Activated CD4-positive, alpha-beta T cell treated with anti-CD3 and anti-CD28 coated beads for 36 hours (primary cell): ENCODE measurements at regions of chr1 and their contacts with region 1.

Region 1: DNA sequence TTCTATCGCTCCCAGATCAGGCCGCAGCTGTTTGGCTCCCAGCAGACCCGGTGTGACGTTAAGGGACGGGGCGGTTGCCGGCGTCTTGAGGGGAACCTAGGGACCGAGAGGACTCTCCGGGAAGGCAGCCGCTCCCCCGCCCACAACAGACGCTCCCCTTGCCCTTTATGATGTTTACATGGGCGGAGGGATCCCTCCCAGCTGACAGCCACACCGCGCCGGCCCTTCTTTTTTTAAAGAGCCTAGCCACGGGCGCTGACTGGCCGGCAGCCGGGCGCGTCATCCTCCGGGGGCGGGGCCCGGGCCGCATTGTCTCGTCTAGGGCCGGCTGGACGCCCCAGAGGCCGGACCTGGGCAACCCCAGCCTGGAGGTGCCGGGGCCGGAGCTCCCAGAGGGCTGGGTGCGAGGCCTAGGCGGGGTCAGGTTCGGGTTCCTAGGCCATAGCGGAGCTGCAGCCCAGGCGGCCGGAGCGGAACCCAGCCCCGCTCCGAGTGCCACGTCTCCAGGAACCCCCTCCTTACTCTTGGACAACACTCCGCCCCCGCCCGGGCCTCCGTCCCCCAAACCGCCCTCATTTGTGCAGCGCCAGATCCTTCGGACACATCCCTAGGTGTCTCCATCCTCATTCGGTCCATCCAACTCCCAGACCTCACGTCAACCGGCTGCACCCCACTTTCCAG is at the start of gene PCAT6:
- DNase-seq: peak; percentile 93
- ATAC-seq: peak; percentile 66
- H3K4me3 Mint-ChIP-seq: peak within 1 kb of the TSS; percentile 75
- H3K27ac Mint-ChIP-seq: peak within 1 kb of the TSS; percentile 68
- H3K4me1 Mint-ChIP-seq: peaks cover 32% of the 10 kb centered on the region
- H3K27me3 Mint-ChIP-seq: peaks cover 8% of the 10 kb centered on the region
- total RNA-seq, gene PCAT6: 0.59 to 2.2 TPM

Region 2: DNA sequence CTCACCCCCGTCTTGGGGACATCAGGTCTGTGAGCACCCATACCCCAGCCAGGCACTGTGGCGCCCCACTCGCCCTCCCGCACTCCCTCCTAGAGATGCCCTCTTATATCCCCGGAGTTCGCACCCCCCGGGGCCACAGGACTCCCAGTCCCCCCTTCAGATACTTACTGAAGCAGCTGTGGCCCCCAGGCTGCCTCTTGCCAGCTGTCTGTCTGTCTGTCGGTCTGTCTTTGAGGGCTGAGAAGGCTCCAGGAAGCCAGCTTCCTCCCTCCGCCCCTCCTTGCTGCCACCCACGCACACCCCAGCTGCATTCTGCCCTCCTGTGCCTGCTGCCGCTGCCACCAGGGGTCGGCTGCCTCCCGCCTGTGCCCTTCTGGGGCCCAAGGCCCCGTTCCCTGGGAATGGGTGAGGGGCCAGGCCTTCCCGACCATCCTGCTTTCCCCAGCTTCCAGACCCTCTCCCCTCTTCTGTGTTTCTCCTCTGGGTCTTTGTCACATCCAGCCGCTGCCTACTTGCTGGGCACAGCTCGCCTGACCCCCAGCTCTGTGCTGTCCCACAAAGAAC is 650.3 kb before region 1 on chr1 and contains the start of gene PTPN7:
- CTCF ChIA-PET with region 1: no interaction called
- POLR2A ChIA-PET with region 1: no interaction called
- intact Hi-C with region 1: loop called in 1 of 2 experiments (anchors 2 kb)
- DNase-seq: peak; percentile 98
- ATAC-seq: peak; percentile 69
- H3K4me3 Mint-ChIP-seq: peak within 1 kb of the TSS; percentile 97
- H3K27ac Mint-ChIP-seq: peak within 1 kb of the TSS; percentile 99
- H3K4me1 Mint-ChIP-seq: peaks cover 80% of the 10 kb centered on the region
- H3K27me3 Mint-ChIP-seq: no peaks in the 10 kb centered on the region
- total RNA-seq, gene PTPN7: 188 to 221 TPM

Region 3: GRCh38 chr1:202692959-202693555 is 117.7 kb before region 1 on chr1:
- CTCF ChIA-PET with region 1: no interaction called
- POLR2A ChIA-PET with region 1: no interaction called
- intact Hi-C with region 1: no loop called
- DNase-seq: peak; percentile 85
- ATAC-seq: peak; percentile 57
- H3K4me3 Mint-ChIP-seq: no peak overlapping the region
- H3K27ac Mint-ChIP-seq: no peak overlapping the region
- H3K4me1 Mint-ChIP-seq: no peaks in the 10 kb centered on the region
- H3K27me3 Mint-ChIP-seq: peaks cover 33% of the 10 kb centered on the region

Region 4: DNA sequence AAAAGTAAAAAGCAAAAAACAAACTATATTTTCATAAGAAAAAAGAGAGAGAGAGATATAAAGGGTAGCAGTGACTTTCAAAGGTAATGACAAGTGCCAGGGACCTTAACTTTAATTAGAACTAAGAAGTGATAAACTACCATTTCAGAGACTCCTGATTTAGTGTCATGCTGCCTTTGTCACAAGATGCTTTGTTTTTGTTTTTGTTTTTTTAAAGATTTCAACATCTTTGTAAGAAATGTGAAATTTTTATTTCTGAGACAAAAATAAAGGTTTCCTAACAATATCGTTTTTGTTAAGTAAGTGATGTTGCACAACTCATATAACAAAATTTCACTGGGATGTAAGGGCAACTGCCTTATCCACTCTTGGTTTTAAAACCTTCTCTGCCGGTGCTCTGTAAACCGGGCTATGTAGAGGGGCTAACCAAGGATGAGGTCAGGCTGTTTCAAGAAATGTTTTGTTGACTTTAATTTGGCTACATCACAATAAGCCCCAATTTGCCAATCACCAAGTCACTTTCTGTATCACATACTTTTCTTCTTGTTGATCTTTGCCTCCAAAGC is 65.3 kb before region 1 on chr1:
- CTCF ChIA-PET with region 1: no interaction called
- POLR2A ChIA-PET with region 1: interaction called, 6 read pairs
- intact Hi-C with region 1: loop called in 1 of 2 experiments (anchors 5 kb)
- DNase-seq: no peak
- ATAC-seq: no peak
- H3K4me3 Mint-ChIP-seq: no peak overlapping the region
- H3K27ac Mint-ChIP-seq: no peak overlapping the region
- H3K4me1 Mint-ChIP-seq: no peaks in the 10 kb centered on the region
- H3K27me3 Mint-ChIP-seq: no peaks in the 10 kb centered on the region

Region 5: DNA sequence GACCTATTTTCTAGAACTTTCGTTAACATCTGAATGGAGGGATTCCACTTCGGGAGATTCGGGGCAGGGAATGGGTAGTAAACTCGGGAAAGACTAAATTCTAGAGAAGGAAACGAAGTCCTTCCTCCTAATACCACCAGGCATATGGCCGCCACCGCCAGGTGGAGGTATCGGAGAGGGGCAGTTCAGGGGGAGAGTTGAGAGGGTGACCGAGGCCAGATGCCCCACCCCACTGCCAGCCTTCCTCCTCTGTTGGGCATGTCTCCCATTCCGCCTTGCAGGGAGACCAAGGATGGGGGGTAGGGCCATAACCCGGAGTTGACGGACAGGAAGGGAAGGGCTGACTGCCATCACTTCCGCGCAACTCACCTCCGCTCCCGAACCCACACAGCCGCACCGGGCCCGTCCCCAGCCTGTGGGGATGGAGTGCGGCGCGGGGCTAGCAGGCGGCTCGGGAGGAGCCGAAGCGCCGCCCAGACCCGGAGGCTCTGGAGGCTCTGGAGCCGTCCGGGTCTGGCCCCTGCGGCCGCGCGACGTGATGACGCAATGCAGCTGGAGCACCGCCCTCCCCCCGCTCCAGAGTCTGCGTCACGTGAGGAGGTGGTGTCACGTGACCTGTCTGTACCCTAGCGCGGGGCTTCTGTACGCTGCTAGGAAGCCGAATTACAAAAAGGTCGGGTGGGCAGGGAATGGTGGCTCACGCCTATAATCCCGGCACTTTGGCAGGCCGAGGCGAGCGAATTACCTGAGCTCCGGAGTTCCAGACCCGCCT is 116.2 kb after region 1 on chr1 and contains the start of gene KLHL12:
- CTCF ChIA-PET with region 1: no interaction called
- POLR2A ChIA-PET with region 1: no interaction called
- intact Hi-C with region 1: loop called in 1 of 2 experiments (anchors 1 kb)
- DNase-seq: peak; percentile 98
- ATAC-seq: peak; percentile 96
- H3K4me3 Mint-ChIP-seq: peak within 1 kb of the TSS; percentile 86
- H3K27ac Mint-ChIP-seq: peak within 1 kb of the TSS; percentile 85
- H3K4me1 Mint-ChIP-seq: peaks cover 24% of the 10 kb centered on the region
- H3K27me3 Mint-ChIP-seq: no peaks in the 10 kb centered on the region
- total RNA-seq, gene KLHL12: 32.1 to 39.1 TPM

Region 6: DNA sequence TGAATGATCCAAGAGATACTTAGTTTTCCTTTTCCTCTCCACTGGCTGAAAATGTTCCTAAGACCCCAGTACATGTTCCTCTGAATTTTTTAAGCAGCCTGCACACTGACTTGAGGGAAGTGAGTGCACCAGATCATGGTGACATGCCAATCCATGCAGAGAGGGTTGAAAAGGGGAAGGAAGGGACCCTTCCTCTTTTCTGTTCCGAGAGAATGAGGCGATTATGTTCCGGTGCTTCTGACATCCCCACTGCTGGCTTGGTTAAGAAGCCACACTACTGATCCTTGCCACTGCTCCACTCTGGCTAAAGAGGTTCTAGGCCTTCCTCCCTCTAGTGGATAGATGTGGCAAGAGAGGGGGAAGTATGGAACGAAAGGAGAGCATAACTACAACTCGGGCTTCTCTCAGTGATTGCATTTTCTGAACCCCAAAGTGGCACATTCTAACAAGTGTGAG is 158.1 kb after region 1 on chr1:
- CTCF ChIA-PET with region 1: no interaction called
- POLR2A ChIA-PET with region 1: no interaction called
- intact Hi-C with region 1: loop called in 1 of 2 experiments (anchors 2 kb)
- DNase-seq: peak; percentile 51
- ATAC-seq: peak; percentile 65
- H3K4me3 Mint-ChIP-seq: no peak overlapping the region
- H3K27ac Mint-ChIP-seq: peak overlapping the region; percentile 16
- H3K4me1 Mint-ChIP-seq: peaks cover 27% of the 10 kb centered on the region
- H3K27me3 Mint-ChIP-seq: no peaks in the 10 kb centered on the region

Region 7: DNA sequence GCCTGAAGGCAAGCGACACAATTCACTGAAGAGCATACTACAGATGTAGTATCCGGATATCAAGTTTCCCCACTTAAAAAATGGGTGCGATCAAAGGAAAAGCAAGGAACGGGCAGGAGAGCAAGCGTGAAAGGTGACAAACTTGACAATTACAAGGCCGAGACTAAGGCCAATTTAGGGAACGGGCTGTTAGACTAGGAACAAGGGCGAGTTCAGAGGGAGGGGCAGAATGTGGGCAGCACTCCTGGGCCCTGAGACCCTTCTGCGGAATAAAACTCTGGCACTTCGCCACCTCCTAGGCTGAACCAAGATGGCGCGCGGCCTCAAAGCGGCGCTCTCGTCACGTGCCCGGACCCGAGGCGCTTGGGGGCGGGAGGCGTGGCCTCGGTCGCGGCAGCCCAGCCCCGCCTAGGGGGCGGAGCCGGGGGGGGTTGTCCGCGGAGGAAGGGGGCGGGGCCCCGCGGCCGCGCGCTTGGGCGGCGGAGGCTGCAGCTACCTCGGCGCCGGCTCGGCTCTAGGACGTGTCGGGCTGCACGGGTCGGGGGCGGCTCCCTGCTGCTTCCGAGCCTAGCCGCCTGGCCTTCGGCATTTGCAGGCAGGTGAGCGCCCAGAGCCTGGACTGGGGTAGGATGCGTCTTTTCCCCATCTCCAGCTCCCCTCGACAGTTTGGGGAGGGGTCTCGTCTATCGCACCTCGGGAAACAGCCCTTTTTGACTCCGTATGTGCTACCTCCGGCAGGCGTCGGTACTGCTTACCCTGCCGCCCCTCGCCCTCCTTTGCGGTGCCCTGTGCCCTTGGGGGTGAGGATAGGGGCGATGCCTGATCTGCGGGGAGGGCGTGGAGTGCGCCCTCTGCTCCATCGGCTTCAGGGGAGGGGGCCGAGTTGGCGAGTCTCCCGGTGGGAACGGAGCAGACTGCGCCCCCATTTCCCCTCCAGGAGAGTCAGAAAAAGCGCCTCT is 215.6 kb after region 1 on chr1 and contains the start of gene PPFIA4:
- CTCF ChIA-PET with region 1: no interaction called
- POLR2A ChIA-PET with region 1: no interaction called
- intact Hi-C with region 1: loop called in 1 of 2 experiments (anchors 1 kb)
- DNase-seq: peak; percentile 95
- ATAC-seq: peak; percentile 95
- H3K4me3 Mint-ChIP-seq: peak within 1 kb of the TSS; percentile 82
- H3K27ac Mint-ChIP-seq: peak within 1 kb of the TSS; percentile 84
- H3K4me1 Mint-ChIP-seq: peaks cover 19% of the 10 kb centered on the region
- H3K27me3 Mint-ChIP-seq: peaks cover 4% of the 10 kb centered on the region
- total RNA-seq, gene PPFIA4: 51.2 to 56.4 TPM

Region 8: GRCh38 chr1:203304919-203305808 is 494.4 kb after region 1 on chr1 and contains the start of gene BTG2:
- CTCF ChIA-PET with region 1: no interaction called
- POLR2A ChIA-PET with region 1: no interaction called
- intact Hi-C with region 1: loop called in 1 of 2 experiments (anchors 5 kb)
- DNase-seq: peak; percentile 96
- ATAC-seq: peak; percentile 88
- H3K4me3 Mint-ChIP-seq: peak within 1 kb of the TSS; percentile 98
- H3K27ac Mint-ChIP-seq: peak within 1 kb of the TSS; percentile 97
- H3K4me1 Mint-ChIP-seq: peaks cover 54% of the 10 kb centered on the region
- H3K27me3 Mint-ChIP-seq: no peaks in the 10 kb centered on the region
- total RNA-seq, gene BTG2: 114 to 142 TPM